Naive thymus-derived CD8-positive, alpha-beta T cell (primary cell): ENCODE measurements at regions of chr12 and their contacts with region 1.

Region 1: DNA sequence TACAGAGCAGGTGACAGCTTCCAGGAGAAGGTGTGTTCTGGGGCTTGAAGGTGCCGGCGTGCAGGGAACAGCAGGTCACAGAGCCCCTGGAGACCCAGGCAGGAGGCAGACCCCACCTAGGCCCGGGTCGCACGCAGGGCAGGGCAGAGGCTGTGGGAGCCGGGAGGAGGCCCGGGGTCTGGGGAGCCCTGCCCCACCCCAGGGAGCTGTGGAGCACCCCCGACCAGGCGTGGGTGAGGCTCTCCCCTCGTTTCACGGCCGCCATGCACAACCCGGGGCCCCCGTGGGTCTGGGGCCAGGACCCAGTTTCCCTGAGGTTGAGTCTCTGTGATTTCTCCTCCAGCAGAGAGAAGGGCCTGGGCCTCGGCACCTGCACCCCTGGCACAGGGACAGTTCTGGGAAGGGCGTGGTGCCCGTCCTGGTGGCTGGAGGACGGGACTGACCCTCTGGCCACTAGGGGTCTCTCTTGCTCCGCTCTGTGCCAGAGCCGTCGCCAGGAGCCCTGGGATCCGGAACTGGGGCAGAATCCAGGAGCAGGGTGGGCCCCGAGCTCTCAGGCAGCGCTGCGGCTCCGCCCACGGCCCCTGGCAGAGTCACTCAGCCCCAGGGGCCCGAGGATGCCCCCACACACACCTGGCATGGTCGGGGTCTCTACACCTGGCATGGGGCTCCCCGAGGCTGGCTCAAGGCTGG is 75.2 kb upstream of the FBRSL1 start:
- DNase-seq: peak; percentile 54 to 89 (median 71)
- ATAC-seq: peak; percentile 93 to 98
- H3K4me3 Mint-ChIP-seq: peak overlapping the region in 2 of 10 donors; percentile 22 to 27
- H3K27ac Mint-ChIP-seq: no peak overlapping the region
- H3K4me1 Mint-ChIP-seq: peaks cover 2 to 8% (median 4%) of the 10 kb centered on the region in 4 donors
- H3K27me3 Mint-ChIP-seq: peaks cover 0 to 2% (median 0%) of the 10 kb centered on the region in 5 donors

Region 2: GRCh38 chr12:132352896-132353800 is 61.6 kb before region 1 on chr12:
- POLR2A ChIA-PET with region 1: no interaction called
- DNase-seq: no peak
- ATAC-seq: no peak
- H3K4me3 Mint-ChIP-seq: no peak overlapping the region
- H3K27ac Mint-ChIP-seq: no peak overlapping the region
- H3K4me1 Mint-ChIP-seq: no peaks in the 10 kb centered on the region
- H3K27me3 Mint-ChIP-seq: peaks cover 0 to 34% (median 0%) of the 10 kb centered on the region in 5 donors

Region 3: GRCh38 chr12:132367071-132367851 is 47.5 kb before region 1 on chr12:
- POLR2A ChIA-PET with region 1: no interaction called
- DNase-seq: no peak
- ATAC-seq: no peak
- H3K4me3 Mint-ChIP-seq: no peak overlapping the region
- H3K27ac Mint-ChIP-seq: no peak overlapping the region
- H3K4me1 Mint-ChIP-seq: peaks cover 0 to 2% (median 0%) of the 10 kb centered on the region in 4 donors
- H3K27me3 Mint-ChIP-seq: peaks cover 20 to 48% (median 28%) of the 10 kb centered on the region in 5 donors

Region 4: GRCh38 chr12:132400011-132400641 is 14.7 kb before region 1 on chr12:
- POLR2A ChIA-PET with region 1: no interaction called
- DNase-seq: no peak
- ATAC-seq: no peak
- H3K4me3 Mint-ChIP-seq: no peak overlapping the region
- H3K27ac Mint-ChIP-seq: no peak overlapping the region
- H3K4me1 Mint-ChIP-seq: peaks cover 0 to 1% (median 0%) of the 10 kb centered on the region in 4 donors
- H3K27me3 Mint-ChIP-seq: peaks cover 0 to 57% (median 29%) of the 10 kb centered on the region in 5 donors

Region 5: DNA sequence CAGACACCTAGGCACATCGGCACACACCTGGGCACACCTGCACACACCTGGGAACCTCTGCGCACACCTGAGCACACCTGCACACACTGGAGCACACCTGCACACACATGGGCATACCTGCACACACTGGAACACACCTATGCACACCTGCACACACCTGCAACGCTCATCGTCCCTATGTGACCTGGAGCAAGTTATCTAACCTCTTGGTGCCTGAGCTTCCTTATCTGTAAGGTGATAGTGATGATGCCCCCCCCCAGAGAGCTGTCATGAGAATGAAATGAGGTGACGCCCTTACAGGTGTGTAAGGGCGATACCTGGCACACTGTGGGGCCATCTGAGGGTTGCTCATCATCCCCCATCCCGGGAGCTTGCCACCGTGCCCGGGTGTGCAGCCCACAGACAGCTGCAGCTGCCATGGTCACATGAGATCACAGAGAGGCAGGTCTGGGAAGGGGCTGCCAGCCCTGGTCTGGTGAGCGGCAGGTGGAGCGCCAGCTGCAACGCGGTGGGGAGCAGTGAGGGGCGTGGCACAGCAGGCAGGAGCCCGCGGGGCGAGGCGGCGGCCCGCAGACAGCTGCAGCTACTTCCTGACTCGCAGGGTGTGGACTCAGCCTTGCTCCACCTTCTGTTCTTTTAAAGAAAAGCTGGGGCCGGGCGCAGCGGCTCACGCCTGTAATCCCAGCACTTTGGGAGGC is 15.3 kb after region 1 on chr12:
- POLR2A ChIA-PET with region 1: interaction called, 10 read pairs
- DNase-seq: peak; percentile 58 to 86 (median 66)
- ATAC-seq: peak; percentile 98
- H3K4me3 Mint-ChIP-seq: peak overlapping the region; percentile 41 to 81 (median 70)
- H3K27ac Mint-ChIP-seq: peak overlapping the region in 6 of 10 donors; percentile 24 to 74 (median 60)
- H3K4me1 Mint-ChIP-seq: peaks cover 11 to 50% (median 41%) of the 10 kb centered on the region in 4 donors
- H3K27me3 Mint-ChIP-seq: no peaks in the 10 kb centered on the region

Region 6: GRCh38 chr12:132523576-132524331 is 109.0 kb after region 1 on chr12:
- POLR2A ChIA-PET with region 1: interaction called, 15 read pairs
- DNase-seq: peak; percentile 49 to 81 (median 72)
- ATAC-seq: peak; percentile 83 to 85
- H3K4me3 Mint-ChIP-seq: no peak overlapping the region
- H3K27ac Mint-ChIP-seq: no peak overlapping the region
- H3K4me1 Mint-ChIP-seq: peaks cover 6 to 26% (median 17%) of the 10 kb centered on the region in 4 donors
- H3K27me3 Mint-ChIP-seq: no peaks in the 10 kb centered on the region

Region 7: DNA sequence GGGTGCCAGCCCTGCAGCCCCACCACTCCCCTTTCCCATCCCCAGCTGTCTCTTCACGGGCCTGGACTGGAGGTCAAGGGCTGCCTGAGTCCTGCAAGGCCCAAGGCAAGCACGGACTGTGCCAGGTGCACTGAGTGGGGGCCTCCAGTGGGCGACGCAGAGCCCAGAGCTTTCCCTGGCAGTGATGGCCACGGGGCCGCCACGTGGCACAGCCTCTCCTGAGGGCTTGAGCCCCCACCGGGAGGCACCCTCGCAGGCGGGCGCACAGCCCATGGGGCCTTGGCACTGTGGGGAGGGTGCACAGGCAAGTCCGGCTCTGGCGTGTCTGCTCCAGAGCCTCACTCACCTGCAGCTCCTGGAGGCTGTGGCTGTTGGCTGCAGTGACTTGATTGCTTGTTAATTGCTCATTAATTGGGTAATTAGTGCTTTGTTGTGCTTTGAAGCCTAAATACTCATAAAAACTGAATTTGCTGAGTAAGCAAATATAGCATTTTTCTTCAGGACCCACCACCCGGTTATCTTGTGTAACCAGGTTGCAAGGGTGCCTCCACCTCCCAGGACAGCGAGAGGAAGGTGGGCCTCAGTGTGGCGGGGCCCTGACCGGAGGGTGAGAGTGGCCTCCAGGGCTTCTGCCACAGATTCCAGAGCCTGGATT is 123.7 kb after region 1 on chr12:
- POLR2A ChIA-PET with region 1: no interaction called
- DNase-seq: no peak
- ATAC-seq: no peak
- H3K4me3 Mint-ChIP-seq: no peak overlapping the region
- H3K27ac Mint-ChIP-seq: no peak overlapping the region
- H3K4me1 Mint-ChIP-seq: peaks cover 10 to 23% (median 14%) of the 10 kb centered on the region in 4 donors
- H3K27me3 Mint-ChIP-seq: no peaks in the 10 kb centered on the region